ENCODE measurements at regions of chr6 and their contacts with region 1.

Region 1: DNA sequence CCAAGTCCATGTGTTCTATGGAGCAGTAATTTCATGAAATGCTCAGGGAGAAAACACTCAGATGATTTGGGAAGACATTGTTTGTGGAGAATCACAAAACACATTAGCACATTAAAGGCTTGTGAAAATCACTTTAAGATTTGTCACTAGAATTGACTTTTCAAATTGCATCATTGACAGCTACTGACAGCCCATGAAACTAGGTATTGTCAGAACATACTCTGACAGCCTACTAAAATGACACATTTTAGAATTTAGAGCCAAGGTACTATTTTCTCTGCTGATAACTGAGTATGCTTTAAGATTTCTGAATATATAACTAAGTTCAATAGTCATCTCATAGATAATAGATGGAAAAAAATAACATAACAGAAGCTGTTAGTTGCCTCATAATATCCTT is 67.4 kb upstream of the FOXC1 start:
- DNase-seq: no peak
- ATAC-seq: no peak
- H3K4me3 ChIP-seq: no peak overlapping the region
- H3K27ac ChIP-seq: no peak overlapping the region
- H3K4me1 ChIP-seq: peaks cover 13% of the 10 kb centered on the region
- H3K27me3 ChIP-seq: peaks cover 0 to 2% of the 10 kb centered on the region in 2 experiments; a peak in 3 of 5 replicates
- CTCF ChIP-seq: no peak
- EP300 ChIP-seq: no peak
- POLR2A ChIP-seq: no peak
- RAD21 ChIP-seq: no peak

Region 2: DNA sequence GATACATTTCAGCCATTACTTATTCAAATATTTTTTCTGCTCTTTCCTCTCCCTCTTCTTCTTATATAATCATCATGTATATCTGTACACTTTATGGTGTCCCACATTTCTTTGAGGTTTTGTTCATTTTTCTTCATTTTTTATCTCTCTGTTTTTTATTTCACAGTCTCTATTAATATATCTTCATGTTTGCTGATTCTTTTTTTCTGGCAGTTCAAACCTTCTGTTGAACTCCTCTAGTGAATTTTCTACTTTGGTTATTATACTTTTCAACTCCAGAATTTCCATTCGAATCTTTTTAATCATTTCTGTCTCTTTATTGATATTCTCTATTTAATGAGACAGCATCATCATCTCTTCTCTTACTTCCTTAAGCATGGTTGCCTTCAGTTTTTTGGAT is 28.5 kb after region 1 on chr6:
- CTCF ChIA-PET with region 1: no interaction called
- POLR2A ChIA-PET with region 1: no interaction called
- in situ Hi-C with region 1: no loop called
- intact Hi-C with region 1: loop called (anchors 2 kb)
- DNase-seq: no peak
- ATAC-seq: no peak
- H3K4me3 ChIP-seq: no peak overlapping the region
- H3K27ac ChIP-seq: no peak overlapping the region
- H3K4me1 ChIP-seq: peaks cover 11% of the 10 kb centered on the region
- H3K27me3 ChIP-seq: peaks cover 3 to 33% of the 10 kb centered on the region in 2 experiments
- CTCF ChIP-seq: no peak
- EP300 ChIP-seq: no peak
- POLR2A ChIP-seq: no peak
- RAD21 ChIP-seq: no peak

Region 3: DNA sequence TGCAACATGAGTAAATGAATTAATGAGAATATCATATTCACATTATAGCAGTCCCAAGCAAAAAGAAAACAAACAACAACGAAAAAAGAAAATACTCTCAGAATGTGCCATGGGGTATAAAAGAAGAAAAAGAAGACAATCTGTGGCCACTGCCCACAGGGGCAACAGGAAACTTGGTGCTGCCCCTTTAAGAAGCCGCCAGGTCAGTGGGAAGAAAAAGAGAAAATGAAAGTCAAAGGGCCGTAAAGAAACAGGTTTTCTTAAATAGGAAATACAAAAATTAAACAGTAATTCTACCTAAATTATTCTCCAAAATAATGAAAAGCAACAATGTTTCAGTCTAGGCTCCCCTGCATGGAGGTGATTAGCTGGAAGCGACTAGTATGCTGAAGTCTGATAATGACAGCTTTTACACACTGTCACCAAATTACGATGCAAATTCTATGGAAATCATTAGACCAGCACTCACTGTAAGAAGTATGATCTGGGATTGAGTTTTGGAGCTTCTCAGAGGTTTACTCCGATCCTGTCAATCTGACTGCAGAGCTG is 679.5 kb after region 1 on chr6:
- CTCF ChIA-PET with region 1: no interaction called
- POLR2A ChIA-PET with region 1: no interaction called
- in situ Hi-C with region 1: no loop called
- intact Hi-C with region 1: no loop called
- DNase-seq: no peak
- ATAC-seq: no peak
- H3K4me3 ChIP-seq: no peak overlapping the region
- H3K27ac ChIP-seq: peak overlapping the region; percentile 14
- H3K4me1 ChIP-seq: peaks cover 96% of the 10 kb centered on the region
- H3K27me3 ChIP-seq: no peaks in the 10 kb centered on the region
- CTCF ChIP-seq: no peak
- EP300 ChIP-seq: no peak
- POLR2A ChIP-seq: no peak
- RAD21 ChIP-seq: no peak

Region 4: GRCh38 chr6:2911171-2911570 is 1368.8 kb after region 1 on chr6:
- CTCF ChIA-PET with region 1: no interaction called
- POLR2A ChIA-PET with region 1: no interaction called
- in situ Hi-C with region 1: no loop called
- intact Hi-C with region 1: no loop called
- DNase-seq: no peak
- ATAC-seq: no peak
- H3K4me3 ChIP-seq: no peak overlapping the region
- H3K27ac ChIP-seq: no peak overlapping the region
- H3K4me1 ChIP-seq: peaks cover 35% of the 10 kb centered on the region
- H3K27me3 ChIP-seq: peaks cover 0 to 20% of the 10 kb centered on the region in 2 experiments; a peak in 4 of 5 replicates
- CTCF ChIP-seq: no peak
- EP300 ChIP-seq: no peak
- POLR2A ChIP-seq: no peak
- RAD21 ChIP-seq: no peak

Measured in HepG2 (cell line).